ENCODE measurements at regions of chr3 and their contacts with region 1.

Region 1: DNA sequence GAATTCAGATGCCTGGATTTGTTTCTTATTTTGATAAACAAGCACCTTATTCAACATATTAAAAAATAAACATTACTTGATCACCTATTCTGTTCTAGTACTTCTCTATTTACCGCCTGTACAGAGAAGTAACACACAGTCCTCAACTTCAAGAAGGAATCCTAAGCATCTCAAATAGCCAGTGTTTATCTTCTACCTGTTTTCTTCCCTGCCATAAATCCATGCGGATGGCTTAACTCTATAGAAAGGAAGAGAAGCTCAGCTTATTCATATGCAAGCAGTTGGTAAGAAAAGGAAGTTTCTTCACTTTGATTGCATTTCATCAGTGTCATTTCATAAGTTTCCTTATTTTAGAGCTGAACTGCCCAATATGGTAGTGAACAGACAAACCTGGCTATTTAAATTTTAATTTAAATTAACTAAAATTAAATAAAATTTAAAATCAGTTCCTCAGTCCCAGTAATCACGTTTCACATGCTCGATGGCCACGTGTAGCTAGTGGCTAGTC is 210.0 kb upstream of the PEX5L start:
- DNase-seq: no peak
- H3K4me3 ChIP-seq: no peak overlapping the region
- H3K27ac ChIP-seq: no peak overlapping the region
- H3K4me1 ChIP-seq: no peaks in the 10 kb centered on the region
- H3K27me3 ChIP-seq: no peaks in the 10 kb centered on the region
- CTCF ChIP-seq: no peak
- EP300 ChIP-seq: no peak
- POLR2A ChIP-seq: no peak

Region 2: GRCh38 chr3:180180795-180181194 is 65.9 kb before region 1 on chr3:
- intact Hi-C with region 1: loop called (anchors 10 kb)
- DNase-seq: no peak
- H3K4me3 ChIP-seq: no peak overlapping the region
- H3K27ac ChIP-seq: no peak overlapping the region
- H3K4me1 ChIP-seq: no peaks in the 10 kb centered on the region
- H3K27me3 ChIP-seq: no peaks in the 10 kb centered on the region
- CTCF ChIP-seq: no peak
- EP300 ChIP-seq: no peak
- POLR2A ChIP-seq: no peak

Region 3: DNA sequence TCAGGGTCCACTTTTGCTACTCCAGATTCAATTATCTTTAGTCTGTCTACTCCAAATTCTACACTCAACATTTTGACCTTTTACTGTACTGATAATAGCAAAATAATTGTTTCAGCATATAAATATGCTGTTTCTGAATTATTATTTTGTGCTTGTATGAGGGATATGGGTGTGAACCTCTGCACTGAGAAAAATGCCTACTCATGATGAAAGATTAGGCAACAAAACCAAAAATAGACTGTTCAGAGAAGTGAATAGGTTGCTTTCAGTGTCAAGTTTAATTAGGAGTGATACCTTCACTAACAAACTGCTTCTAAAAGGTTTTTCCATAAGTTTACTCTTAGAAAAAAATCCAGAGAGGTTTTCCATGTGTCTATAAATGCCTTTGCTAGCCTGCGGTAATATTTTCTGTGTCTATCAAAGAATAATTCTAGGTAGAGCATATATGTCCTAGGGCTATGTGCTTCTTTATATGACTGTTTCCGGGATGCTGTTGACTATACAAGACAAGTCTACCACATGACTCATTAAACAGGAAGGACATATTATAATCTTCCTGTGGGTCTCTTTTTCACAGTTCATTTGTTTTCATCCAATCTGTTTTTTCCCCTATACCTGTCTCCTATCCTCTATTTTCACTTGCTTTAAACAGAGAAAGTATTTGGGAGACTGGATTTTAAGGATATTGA is 136.7 kb after region 1 on chr3:
- intact Hi-C with region 1: no loop called
- DNase-seq: no peak
- H3K4me3 ChIP-seq: no peak overlapping the region
- H3K27ac ChIP-seq: no peak overlapping the region
- H3K4me1 ChIP-seq: no peaks in the 10 kb centered on the region
- H3K27me3 ChIP-seq: no peaks in the 10 kb centered on the region
- CTCF ChIP-seq: no peak
- EP300 ChIP-seq: no peak
- POLR2A ChIP-seq: no peak

Measured in stomach (tissue), 19 donors.